Endothelial cell of umbilical vein (primary cell): ENCODE measurements at regions of chr3 and their contacts with region 1.

Region 1: DNA sequence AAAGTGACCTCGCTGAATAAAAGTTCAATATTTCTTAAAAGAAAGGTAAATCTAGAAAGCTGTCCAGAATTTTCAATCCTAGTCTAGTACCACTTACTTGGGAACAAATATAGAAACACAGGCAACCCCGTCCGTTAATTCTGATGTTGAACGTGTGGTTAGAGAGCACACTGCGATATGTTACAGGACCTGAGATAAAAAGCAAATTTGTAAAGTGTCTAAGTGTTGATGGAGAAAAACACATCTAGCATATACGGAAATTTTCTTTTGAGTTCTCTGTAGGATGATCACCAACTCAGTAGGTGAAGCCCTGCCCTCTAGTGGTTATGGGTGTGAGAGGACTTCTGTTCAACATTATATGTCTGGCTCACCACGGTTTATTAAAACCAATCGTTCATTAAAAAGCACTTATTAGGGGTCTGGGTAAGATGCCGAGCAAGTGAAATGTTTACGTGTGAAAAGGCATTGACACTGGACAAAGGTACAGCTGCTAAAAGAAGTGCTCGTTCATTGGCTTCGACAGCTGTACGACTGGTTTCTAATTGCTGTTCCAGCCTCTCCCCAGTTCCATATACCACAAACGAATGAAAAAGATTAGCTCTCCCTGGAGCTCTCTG is 1.0 kb upstream of the ATP2C1 start:
- DNase-seq: peak; percentile 82
- H3K4me3 ChIP-seq: peak overlapping the region; percentile 61 to 87 (median 82)
- H3K27ac ChIP-seq: peak overlapping the region; percentile 76
- H3K4me1 ChIP-seq: peaks cover 14% of the 10 kb centered on the region
- H3K27me3 ChIP-seq: no peaks in the 10 kb centered on the region
- CTCF ChIP-seq: peak; percentile 71 to 74
- POLR2A ChIP-seq: peak; percentile 45

Region 2: DNA sequence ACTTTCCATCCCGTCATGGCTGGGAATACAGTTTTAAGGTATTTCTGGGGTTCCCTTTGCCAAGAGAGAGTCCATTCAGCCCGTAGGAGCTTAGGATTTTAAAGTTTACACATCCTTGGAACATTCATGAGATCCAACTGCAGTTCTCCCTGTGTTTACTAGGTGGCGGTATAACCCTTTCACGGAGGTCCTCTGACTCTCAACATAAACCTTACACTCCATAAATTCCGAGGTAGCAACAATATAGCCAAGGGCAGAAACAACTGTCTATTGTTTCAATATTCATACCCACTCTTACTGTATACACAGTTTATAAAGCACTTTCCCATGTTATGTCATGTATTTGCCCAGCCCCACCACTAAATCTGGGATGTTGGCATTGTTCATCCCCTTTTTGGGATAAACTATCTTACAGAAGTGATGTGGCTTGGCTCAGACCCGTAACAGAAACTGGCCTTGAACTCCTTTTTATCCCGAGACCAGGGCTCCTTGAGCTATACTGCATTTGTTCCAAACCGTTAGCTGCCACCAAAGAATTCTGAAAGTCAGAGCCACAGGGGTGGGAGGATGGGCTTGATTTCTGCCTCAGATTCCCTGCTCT is 616.6 kb before region 1 on chr3:
- CTCF ChIA-PET with region 1: interaction called, 69 read pairs
- POLR2A ChIA-PET with region 1: no interaction called
- dilution Hi-C with region 1: no loop called
- intact Hi-C with region 1: loop called (anchors 1 kb)
- DNase-seq: peak; percentile 60
- H3K4me3 ChIP-seq: no peak overlapping the region
- H3K27ac ChIP-seq: no peak overlapping the region
- H3K4me1 ChIP-seq: no peaks in the 10 kb centered on the region
- H3K27me3 ChIP-seq: peaks cover 8 to 15% of the 10 kb centered on the region in 2 experiments
- CTCF ChIP-seq: peak; percentile 76 to 79
- POLR2A ChIP-seq: no peak

Region 3: GRCh38 chr3:130692455-130692854 is 200.4 kb before region 1 on chr3:
- CTCF ChIA-PET with region 1: no interaction called
- POLR2A ChIA-PET with region 1: no interaction called
- dilution Hi-C with region 1: no loop called
- intact Hi-C with region 1: loop called (anchors 2 kb)
- DNase-seq: peak; percentile 94
- H3K4me3 ChIP-seq: no peak overlapping the region
- H3K27ac ChIP-seq: peak overlapping the region; percentile 92
- H3K4me1 ChIP-seq: peaks cover 15% of the 10 kb centered on the region
- H3K27me3 ChIP-seq: no peaks in the 10 kb centered on the region
- CTCF ChIP-seq: no peak
- POLR2A ChIP-seq: no peak

Region 4: GRCh38 chr3:130759699-130760338 is 133.0 kb before region 1 on chr3:
- CTCF ChIA-PET with region 1: interaction called, 8 read pairs
- POLR2A ChIA-PET with region 1: no interaction called
- dilution Hi-C with region 1: no loop called
- intact Hi-C with region 1: loop called (anchors 1 kb)
- DNase-seq: peak; percentile 61
- H3K4me3 ChIP-seq: no peak overlapping the region
- H3K27ac ChIP-seq: no peak overlapping the region
- H3K4me1 ChIP-seq: no peaks in the 10 kb centered on the region
- H3K27me3 ChIP-seq: no peaks in the 10 kb centered on the region
- CTCF ChIP-seq: peak; percentile 52 to 67
- POLR2A ChIP-seq: no peak

Region 5: GRCh38 chr3:130789782-130790322 is 103.0 kb before region 1 on chr3:
- CTCF ChIA-PET with region 1: no interaction called
- POLR2A ChIA-PET with region 1: no interaction called
- dilution Hi-C with region 1: no loop called
- intact Hi-C with region 1: no loop called
- DNase-seq: no peak
- H3K4me3 ChIP-seq: no peak overlapping the region
- H3K27ac ChIP-seq: no peak overlapping the region
- H3K4me1 ChIP-seq: no peaks in the 10 kb centered on the region
- H3K27me3 ChIP-seq: peaks cover 4 to 20% of the 10 kb centered on the region in 2 experiments
- CTCF ChIP-seq: no peak
- POLR2A ChIP-seq: no peak

Region 6: GRCh38 chr3:130976706-130977105 is 83.8 kb after region 1 on chr3:
- CTCF ChIA-PET with region 1: no interaction called
- POLR2A ChIA-PET with region 1: no interaction called
- dilution Hi-C with region 1: no loop called
- intact Hi-C with region 1: no loop called
- DNase-seq: no peak
- H3K4me3 ChIP-seq: no peak overlapping the region
- H3K27ac ChIP-seq: no peak overlapping the region
- H3K4me1 ChIP-seq: no peaks in the 10 kb centered on the region
- H3K27me3 ChIP-seq: no peaks in the 10 kb centered on the region
- CTCF ChIP-seq: no peak
- POLR2A ChIP-seq: no peak

Region 7: DNA sequence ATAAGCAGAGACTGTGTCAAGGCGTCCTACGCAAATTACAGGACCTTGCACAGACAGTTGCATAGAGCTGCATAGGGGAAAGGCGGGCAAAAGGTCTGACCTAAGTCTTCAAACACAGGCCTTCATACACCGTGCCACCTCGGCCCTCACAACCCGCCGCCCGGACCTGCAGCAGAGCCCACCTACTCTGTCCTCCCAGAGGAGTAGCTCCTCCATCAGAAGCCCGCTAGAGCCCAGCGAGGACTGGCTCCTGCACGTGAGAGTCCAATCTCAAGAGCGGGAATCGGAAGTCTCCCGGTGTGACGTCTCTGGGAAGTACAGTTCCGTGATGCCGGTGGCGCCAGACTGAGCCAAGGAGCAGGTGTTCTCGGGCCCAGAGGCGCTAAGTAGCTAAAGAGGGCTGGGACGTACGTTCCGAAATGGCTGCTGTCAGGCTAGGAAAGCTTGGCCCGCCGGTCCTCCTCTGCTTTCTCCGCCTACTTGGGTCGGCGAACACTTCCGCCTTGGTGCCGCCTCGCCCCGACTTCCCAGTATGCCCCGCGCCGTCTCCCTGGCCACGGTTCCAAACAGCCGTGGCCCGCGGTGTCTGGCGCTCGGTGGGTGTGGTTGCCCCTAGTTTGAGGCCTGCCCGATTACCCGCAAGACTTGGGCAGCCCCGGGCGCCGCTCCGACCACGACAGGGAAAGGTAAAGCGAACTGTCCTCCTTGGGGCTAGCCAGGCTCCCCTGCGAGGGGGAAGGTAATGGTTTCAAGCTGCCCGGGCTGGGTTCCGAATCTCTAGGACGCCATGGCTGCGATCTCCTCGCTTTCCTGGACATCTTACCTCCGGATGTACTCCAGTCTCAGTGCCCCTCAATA is 133.7 kb after region 1 on chr3 and contains the starts of genes ASTE1 and NEK11:
- CTCF ChIA-PET with region 1: interaction called, 9 read pairs
- POLR2A ChIA-PET with region 1: no interaction called
- dilution Hi-C with region 1: no loop called
- intact Hi-C with region 1: loop called (anchors 1 kb)
- DNase-seq: peak; percentile 84
- H3K4me3 ChIP-seq: peak within 1 kb of the TSS; percentile 44 to 72 (median 54)
- H3K27ac ChIP-seq: peak within 1 kb of the TSS; percentile 91
- H3K4me1 ChIP-seq: peaks cover 15% of the 10 kb centered on the region
- H3K27me3 ChIP-seq: no peaks in the 10 kb centered on the region
- CTCF ChIP-seq: no peak
- POLR2A ChIP-seq: peak; percentile 88
- total RNA-seq, gene ASTE1: 5.8 and 6.7 TPM in 2 replicates
- total RNA-seq, gene NEK11: 3.1 and 4.3 TPM in 2 replicates

Region 8: DNA sequence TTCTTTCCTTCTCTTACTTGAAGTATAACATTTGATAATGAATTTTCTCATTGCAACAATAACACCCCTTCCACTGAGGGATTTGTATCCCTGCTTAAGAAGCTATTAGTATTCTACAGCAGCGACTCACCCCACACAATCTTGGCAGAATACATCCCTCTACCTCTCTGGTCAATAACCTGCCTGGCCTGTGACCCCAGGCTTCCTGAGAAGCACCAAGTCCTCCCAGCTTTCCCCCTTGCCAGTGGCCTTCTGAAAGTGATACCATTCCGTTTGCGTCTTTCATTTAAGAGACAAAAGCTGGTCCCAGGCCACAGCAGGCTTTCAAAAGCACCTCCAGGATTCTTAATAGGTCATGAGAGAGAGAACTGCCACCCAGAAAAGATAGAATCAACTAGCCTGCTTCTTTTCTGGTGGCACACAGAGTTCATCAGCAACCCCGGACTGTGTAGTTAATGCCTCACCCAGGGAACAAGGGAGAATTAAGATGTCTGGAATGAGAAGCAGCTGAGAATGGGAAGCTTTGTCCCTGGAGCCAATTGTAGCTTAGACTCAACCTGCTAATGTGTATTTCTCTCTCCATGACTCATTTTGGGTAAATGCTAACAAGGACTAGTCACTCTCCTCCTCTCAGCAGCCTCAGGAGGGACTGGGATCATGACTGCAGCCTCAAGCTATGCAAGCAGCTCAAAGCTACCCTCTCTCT is 1242.9 kb after region 1 on chr3:
- CTCF ChIA-PET with region 1: no interaction called
- POLR2A ChIA-PET with region 1: no interaction called
- dilution Hi-C with region 1: no loop called
- intact Hi-C with region 1: loop called (anchors 5 kb)
- DNase-seq: peak; percentile 75
- H3K4me3 ChIP-seq: no peak overlapping the region
- H3K27ac ChIP-seq: peak overlapping the region; percentile 92
- H3K4me1 ChIP-seq: peaks cover 26% of the 10 kb centered on the region
- H3K27me3 ChIP-seq: peaks cover 0 to 2% of the 10 kb centered on the region in 2 experiments
- CTCF ChIP-seq: no peak
- POLR2A ChIP-seq: no peak